Mammary epithelial cell (primary cell): ENCODE measurements at regions of chr4 and their contacts with region 1.

Region 1: GRCh38 chr4:81852031-81852715 is 380.5 kb upstream of the RASGEF1B start:
- DNase-seq: no peak
- H3K4me3 ChIP-seq: no peak overlapping the region
- H3K27ac ChIP-seq: no peak overlapping the region
- H3K4me1 ChIP-seq: no peaks in the 10 kb centered on the region
- H3K27me3 ChIP-seq: no peaks in the 10 kb centered on the region
- CTCF ChIP-seq: no peak

Region 2: GRCh38 chr4:81758574-81759264 is 93.5 kb before region 1 on chr4:
- CTCF ChIA-PET with region 1: no interaction called
- dilution Hi-C with region 1: no loop called
- in situ Hi-C with region 1: no loop called
- intact Hi-C with region 1: no loop called
- DNase-seq: no peak
- H3K4me3 ChIP-seq: no peak overlapping the region
- H3K27ac ChIP-seq: no peak overlapping the region
- H3K4me1 ChIP-seq: no peaks in the 10 kb centered on the region
- H3K27me3 ChIP-seq: no peaks in the 10 kb centered on the region
- CTCF ChIP-seq: no peak

Region 3: DNA sequence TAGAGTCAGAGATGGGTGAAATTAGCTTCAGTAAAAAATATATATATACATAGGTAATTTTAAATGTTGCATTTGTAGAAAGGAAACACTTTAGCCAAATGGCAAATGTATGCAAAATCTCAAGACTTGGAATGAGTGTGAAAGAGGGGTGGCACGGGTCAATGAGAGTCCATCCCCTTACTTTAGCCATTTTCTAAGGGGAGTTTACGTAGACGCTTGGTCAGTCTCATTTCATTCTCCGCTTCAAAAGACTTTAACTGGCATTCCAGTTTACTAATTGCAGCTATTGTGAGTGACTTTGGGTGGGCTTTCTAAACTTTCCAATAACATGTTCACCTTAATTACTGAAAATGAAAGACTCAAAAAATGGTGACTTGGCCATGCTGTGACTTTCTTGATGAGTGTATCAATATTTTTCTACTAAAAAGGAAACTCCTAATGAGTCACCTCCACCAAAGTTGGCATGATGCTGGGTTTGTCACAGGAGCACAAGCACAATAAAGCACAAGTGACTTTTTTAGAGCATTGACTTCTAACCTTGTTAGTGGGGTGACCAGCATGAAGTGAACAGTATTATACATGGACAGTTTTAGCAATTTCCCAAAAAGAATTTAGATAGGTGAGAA is 24.5 kb before region 1 on chr4:
- CTCF ChIA-PET with region 1: no interaction called
- dilution Hi-C with region 1: loop called (anchors 5 kb)
- in situ Hi-C with region 1: no loop called
- intact Hi-C with region 1: no loop called
- DNase-seq: peak; percentile 21
- H3K4me3 ChIP-seq: no peak overlapping the region
- H3K27ac ChIP-seq: no peak overlapping the region
- H3K4me1 ChIP-seq: peaks cover 4% of the 10 kb centered on the region
- H3K27me3 ChIP-seq: no peaks in the 10 kb centered on the region
- CTCF ChIP-seq: no peak

Region 4: GRCh38 chr4:82192017-82192673 is 340.0 kb after region 1 on chr4:
- CTCF ChIA-PET with region 1: no interaction called
- dilution Hi-C with region 1: no loop called
- in situ Hi-C with region 1: no loop called
- intact Hi-C with region 1: loop called (anchors 5 kb)
- DNase-seq: no peak
- H3K4me3 ChIP-seq: no peak overlapping the region
- H3K27ac ChIP-seq: no peak overlapping the region
- H3K4me1 ChIP-seq: no peaks in the 10 kb centered on the region
- H3K27me3 ChIP-seq: no peaks in the 10 kb centered on the region
- CTCF ChIP-seq: no peak

Region 5: DNA sequence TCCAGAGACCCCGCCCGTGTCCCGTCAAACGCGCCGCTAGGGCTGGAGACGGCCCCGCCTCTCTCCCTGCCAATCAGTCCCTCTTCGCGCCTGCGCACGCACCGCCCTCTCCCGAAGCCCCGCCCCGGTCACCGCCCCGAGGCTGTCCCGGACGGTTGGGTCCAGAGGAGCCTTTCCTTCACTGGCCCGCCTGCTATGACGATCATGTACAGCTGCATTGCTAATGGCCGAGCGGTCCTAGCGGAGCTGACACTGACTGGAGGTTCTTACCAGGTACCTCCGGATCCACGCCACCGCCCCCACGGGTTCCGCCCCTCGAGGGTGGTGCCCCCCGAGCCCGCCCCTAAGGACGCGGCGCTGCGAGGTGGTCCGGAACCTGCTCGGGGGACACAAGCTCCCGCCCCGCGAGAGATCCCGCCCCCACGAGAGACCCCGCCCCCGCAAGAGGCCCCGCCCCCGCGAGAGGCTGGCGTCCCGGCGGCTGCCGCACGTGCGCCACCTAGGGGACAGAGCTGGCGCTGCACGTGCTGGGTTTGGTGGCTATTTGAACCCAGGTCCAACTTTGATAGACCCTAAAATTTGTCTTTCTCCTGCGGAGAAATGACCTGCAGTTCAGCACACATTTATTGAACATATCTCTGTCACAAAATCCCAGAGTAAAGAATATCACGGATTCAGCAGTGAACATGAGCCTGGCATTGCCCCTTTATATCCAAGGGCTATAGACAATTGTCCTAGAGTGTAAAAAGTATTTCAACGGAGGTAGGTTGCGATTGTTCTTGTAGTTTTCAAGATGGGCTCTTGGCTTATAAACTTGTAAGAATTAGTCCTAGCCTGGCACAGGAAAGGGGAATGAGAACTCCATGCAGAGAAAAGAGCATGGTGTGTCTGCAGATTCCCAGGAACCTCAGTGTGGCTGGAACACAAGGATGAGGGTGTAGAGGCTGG is 433.0 kb after region 1 on chr4:
- CTCF ChIA-PET with region 1: interaction called, 21 read pairs
- dilution Hi-C with region 1: no loop called
- in situ Hi-C with region 1: no loop called
- intact Hi-C with region 1: no loop called
- DNase-seq: peak; percentile 100
- H3K4me3 ChIP-seq: peak overlapping the region; percentile 47 to 65 (median 60)
- H3K27ac ChIP-seq: no peak overlapping the region
- H3K4me1 ChIP-seq: no peaks in the 10 kb centered on the region
- H3K27me3 ChIP-seq: peaks cover 6% of the 10 kb centered on the region
- CTCF ChIP-seq: peak; percentile 58 to 94